Panc1 (cell line): ENCODE measurements at regions of chr2 and their contacts with region 1.

Region 1: DNA sequence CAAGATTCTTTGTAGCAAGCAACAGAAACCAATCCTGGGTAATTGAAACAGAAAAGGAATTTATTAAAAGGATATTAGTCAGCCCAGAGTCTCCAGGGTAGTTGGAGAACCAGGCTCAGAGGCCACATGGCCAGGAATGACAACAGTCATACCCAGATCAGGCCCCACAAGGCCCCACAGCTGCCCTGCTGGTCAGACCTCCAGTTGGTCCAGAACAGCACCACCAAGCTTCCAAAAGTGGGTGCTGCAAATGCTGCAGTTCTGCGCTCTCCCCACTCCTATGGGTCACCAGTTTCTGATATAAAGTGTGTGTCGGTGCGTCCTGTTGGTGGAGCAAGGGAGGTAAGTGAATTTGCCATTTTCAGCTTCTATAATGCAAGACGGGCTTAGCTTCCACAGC is 29.9 kb downstream of the KLHL29 start:
- DNase-seq: no peak
- ATAC-seq: peak; percentile 58; the same call in 1 of the 2 replicates
- H3K4me3 ChIP-seq: no peak overlapping the region
- H3K27ac ChIP-seq: no peak overlapping the region
- H3K4me1 ChIP-seq: no peaks in the 10 kb centered on the region
- H3K27me3 ChIP-seq: no peaks in the 10 kb centered on the region
- CTCF ChIP-seq: no peak; the same call in 1 of the 2 replicates

Region 2: DNA sequence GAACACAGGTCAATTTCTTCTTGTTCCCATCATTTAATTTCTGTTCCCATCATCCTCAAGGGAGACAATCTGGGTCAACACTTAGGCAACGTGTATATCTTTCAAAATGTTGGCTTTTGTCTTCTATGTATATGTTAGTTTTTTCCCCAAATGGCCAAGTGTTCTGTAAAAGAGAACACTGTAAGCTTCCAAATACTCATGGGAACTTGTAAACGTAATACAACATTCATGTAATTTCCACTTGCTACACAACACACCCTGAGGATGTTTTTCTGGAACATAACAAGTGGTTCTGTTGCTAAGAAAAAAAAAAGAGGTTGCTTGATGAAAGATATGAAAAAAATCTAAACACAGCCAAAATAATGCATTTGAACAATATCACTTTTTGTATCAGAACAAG is 363.0 kb after region 1 on chr2:
- CTCF ChIA-PET with region 1: interaction called, 10 read pairs
- POLR2A ChIA-PET with region 1: no interaction called
- in situ Hi-C with region 1: no loop called
- intact Hi-C with region 1: no loop called
- DNase-seq: no peak
- ATAC-seq: no peak
- H3K4me3 ChIP-seq: no peak overlapping the region
- H3K27ac ChIP-seq: no peak overlapping the region
- H3K4me1 ChIP-seq: no peaks in the 10 kb centered on the region
- H3K27me3 ChIP-seq: no peaks in the 10 kb centered on the region
- CTCF ChIP-seq: no peak